ENCODE measurements at regions of chr2 and their contacts with region 1.

Region 1: DNA sequence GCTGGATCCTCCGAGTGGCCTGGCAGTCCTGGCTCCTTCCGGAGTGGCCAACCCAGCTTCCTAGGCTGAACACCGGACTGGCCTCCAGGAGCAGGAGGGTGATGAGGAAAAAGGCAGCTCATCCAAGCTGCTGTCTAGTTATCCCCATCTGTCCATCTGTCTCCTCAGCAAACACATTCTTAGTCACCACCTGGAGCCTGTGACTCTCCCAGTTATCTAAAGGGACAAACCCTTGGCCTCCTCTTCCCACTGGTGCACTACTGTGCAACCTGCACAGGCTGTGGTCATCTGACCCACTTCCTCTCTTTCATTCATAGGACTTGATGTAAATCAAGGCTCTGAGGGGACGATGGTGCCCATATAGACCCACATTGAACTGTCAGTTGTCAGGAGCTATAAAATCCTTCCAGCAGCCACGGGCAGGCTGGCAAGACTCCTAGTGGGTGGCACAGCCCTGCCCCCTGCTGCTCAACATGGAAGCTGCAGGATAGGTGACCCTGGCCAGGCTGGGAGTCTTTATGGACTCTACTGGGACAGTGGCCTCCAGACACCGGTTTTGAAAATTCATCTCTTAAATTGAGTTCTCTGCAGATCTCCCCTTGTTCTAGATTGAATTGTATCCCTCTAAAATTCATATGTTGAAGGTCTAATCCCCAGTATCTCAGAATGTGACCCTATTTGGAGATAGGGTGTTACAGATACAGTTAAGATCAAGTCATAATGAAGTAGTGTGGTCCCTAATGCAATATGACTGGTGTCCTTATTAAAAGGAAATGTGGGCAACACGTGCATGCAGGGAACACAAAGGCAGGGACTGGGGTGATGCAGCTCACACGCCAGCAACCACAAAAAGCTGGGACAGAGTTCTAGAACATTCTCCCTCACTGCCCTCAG is 29.3 kb upstream of the DUSP2 start:
- DNase-seq: peak; percentile 65 to 86 (median 78)
- ATAC-seq: peak; percentile 97
- H3K4me3 ChIP-seq: no peak overlapping the region
- H3K4me3 Mint-ChIP-seq: peak overlapping the region in 1 of 10 donors; percentile 23
- H3K27ac ChIP-seq: no peak overlapping the region
- H3K27ac Mint-ChIP-seq: peak overlapping the region in 8 of 9 donors; percentile 28 to 96 (median 62)
- H3K4me1 ChIP-seq: peaks cover 4 to 8% of the 10 kb centered on the region in 2 donors
- H3K4me1 Mint-ChIP-seq: peaks cover 6 to 21% (median 13%) of the 10 kb centered on the region in 7 donors
- H3K27me3 ChIP-seq: no peaks in the 10 kb centered on the region
- H3K27me3 Mint-ChIP-seq: no peaks in the 10 kb centered on the region

Region 2: DNA sequence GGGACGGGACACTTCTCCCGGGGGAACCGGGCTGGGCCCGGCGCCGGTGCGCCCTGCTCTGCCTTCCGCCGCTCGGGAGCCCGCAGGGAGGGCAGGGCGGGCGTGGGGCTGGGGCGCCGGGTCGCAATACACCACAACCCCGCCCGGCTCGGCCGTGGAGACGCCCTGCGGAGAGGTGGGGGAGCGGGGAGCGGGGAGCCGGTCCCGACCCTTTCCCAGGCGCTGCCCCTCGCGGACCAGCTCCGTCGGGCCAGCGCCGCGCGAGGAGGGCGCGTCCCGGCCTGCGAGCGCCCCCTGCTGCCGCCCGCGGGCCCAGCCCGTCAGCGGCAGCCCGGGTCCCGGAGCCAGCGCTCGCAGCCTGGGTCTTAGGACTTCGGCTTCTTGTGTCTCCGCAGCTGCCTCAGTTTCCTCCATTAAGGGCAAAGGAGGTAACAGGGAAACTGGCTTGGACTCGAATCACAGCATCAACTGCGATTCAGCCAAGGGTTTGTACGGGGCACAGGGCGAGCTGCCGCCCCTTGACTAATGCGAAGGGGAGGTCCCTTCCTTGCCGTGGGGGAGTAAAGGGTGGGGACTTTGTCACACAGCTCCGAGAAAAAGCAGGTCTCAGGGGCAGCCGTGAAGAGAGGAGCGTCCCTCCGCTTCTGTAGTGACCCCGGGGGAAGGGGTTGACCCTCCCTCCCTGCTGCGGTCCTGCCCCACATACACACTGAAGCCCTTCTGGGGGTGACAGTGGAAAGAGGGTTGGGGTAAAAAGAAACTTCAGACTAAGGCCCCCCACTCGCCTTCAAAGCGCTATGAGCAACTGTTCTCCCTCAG is 57.4 kb before region 1 on chr2:
- CTCF ChIA-PET with region 1: interaction called, 11 read pairs
- POLR2A ChIA-PET with region 1: no interaction called
- intact Hi-C with region 1: no loop called
- DNase-seq: peak; percentile 36 to 83 (median 70)
- ATAC-seq: peak; percentile 85
- H3K4me3 ChIP-seq: peak overlapping the region; percentile 41
- H3K4me3 Mint-ChIP-seq: peak overlapping the region; percentile 28 to 79 (median 62)
- H3K27ac ChIP-seq: peak overlapping the region; percentile 55
- H3K27ac Mint-ChIP-seq: peak overlapping the region in 1 of 9 donors; percentile 14
- H3K4me1 ChIP-seq: peaks cover 5 to 8% of the 10 kb centered on the region in 2 donors
- H3K4me1 Mint-ChIP-seq: peaks cover 4 to 19% (median 10%) of the 10 kb centered on the region in 7 donors
- H3K27me3 ChIP-seq: no peaks in the 10 kb centered on the region
- H3K27me3 Mint-ChIP-seq: peaks cover 23 to 50% (median 32%) of the 10 kb centered on the region in 5 donors

Region 3: DNA sequence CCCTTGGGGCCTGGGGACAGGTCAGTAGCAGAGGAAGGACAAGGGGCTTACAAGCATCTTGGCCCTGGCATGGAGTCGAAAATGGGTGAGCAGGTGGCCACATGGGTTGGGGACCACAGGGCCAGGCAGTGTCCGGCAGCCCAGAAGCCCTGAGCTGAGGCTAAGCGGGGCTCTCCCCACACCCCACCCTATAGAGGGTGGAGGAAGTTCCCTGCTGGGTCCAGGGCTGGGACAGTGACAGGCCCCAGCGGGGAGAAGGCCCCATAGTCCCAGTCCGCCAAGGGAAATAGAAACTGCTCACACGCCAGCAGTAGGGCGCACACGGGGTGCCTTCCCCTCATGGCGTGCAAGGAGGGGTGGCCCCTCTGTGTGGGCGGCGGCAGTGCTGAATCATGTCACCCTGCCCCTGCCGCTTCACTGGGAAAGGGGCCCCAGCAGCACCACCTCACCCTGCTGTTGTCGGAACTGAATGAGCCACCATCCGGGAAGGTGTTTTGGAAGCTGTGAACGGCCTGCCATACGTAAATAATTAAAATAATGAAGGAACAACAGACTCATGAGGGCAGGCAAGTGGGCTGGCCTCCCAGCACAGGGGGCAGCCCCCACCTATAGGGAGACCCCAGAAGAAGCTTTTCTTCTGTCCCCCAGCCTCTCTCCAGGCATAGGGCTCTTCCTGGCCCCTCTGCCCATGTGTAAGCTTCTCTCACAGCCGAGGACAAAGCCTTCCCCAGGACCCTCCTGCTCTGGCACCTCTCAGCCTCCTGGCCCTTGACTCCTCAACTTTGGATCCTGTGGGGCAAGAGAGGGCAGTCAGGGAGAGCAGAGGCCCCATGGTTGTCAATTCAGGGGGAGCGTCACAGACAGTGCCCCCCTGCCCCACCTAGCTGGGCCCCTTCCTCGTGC is 16.6 kb before region 1 on chr2:
- CTCF ChIA-PET with region 1: interaction called, 21 read pairs
- POLR2A ChIA-PET with region 1: interaction called, 14 read pairs
- intact Hi-C with region 1: no loop called
- DNase-seq: peak in 8 of 9 donors; percentile 37 to 93 (median 50)
- ATAC-seq: peak; percentile 82
- H3K4me3 ChIP-seq: peak overlapping the region; percentile 41
- H3K4me3 Mint-ChIP-seq: peak overlapping the region; percentile 64 to 92 (median 69)
- H3K27ac ChIP-seq: peak overlapping the region; percentile 56
- H3K27ac Mint-ChIP-seq: peak overlapping the region; percentile 76 to 97 (median 84)
- H3K4me1 ChIP-seq: peaks cover 42 to 71% of the 10 kb centered on the region in 2 donors
- H3K4me1 Mint-ChIP-seq: peaks cover 49 to 79% (median 69%) of the 10 kb centered on the region in 7 donors
- H3K27me3 ChIP-seq: no peaks in the 10 kb centered on the region
- H3K27me3 Mint-ChIP-seq: no peaks in the 10 kb centered on the region